Endothelial cell of umbilical vein (primary cell): ENCODE measurements at regions of chr2 and their contacts with region 1.

Region 1: GRCh38 chr2:224369028-224369632 is 32.8 kb downstream of the FAM124B start:
- DNase-seq: no peak
- H3K4me3 ChIP-seq: no peak overlapping the region
- H3K27ac ChIP-seq: no peak overlapping the region
- H3K4me1 ChIP-seq: no peaks in the 10 kb centered on the region
- H3K27me3 ChIP-seq: no peaks in the 10 kb centered on the region
- CTCF ChIP-seq: peak; percentile 49 to 50
- POLR2A ChIP-seq: no peak

Region 2: DNA sequence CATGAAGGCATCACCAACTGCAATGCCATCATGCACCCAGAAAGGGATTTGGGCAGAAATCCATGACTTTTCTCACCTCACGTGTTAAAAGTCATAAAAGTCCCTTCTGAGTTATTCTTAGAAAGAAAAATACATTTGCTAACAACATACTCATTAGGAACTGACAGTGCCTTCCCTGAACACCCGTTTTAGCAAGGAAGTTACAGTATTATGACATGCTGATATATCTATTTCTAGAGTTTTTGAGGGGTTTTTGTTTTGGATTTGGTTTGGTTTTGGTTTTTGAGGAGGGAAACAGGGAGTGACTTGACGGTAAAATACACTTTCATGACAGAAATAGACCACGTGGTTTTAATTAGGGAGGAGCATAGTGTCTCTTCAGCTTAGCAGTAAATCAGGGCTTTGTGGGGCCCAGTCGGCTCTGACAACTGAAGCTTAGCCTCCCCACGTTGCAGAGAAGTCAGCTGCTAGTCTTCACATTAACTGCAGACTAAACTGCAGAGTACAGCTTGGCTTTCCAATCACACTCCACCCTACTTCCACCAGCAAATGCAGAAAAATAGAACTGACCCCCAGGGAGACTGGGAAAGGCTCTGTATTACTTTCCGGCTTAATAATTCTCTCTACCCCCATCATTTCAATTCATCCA is 108.6 kb before region 1 on chr2:
- CTCF ChIA-PET with region 1: no interaction called
- POLR2A ChIA-PET with region 1: no interaction called
- dilution Hi-C with region 1: no loop called
- intact Hi-C with region 1: no loop called
- DNase-seq: no peak
- H3K4me3 ChIP-seq: no peak overlapping the region
- H3K27ac ChIP-seq: no peak overlapping the region
- H3K4me1 ChIP-seq: no peaks in the 10 kb centered on the region
- H3K27me3 ChIP-seq: peaks cover 0 to 4% of the 10 kb centered on the region in 2 experiments
- CTCF ChIP-seq: no peak
- POLR2A ChIP-seq: no peak

Region 3: GRCh38 chr2:224442071-224442967 is 73.2 kb after region 1 on chr2:
- CTCF ChIA-PET with region 1: interaction called, 84 read pairs
- POLR2A ChIA-PET with region 1: interaction called, 3 read pairs
- dilution Hi-C with region 1: no loop called
- intact Hi-C with region 1: no loop called
- DNase-seq: peak; percentile 61
- H3K4me3 ChIP-seq: peak overlapping the region; percentile 44 to 86 (median 69)
- H3K27ac ChIP-seq: peak overlapping the region; percentile 62
- H3K4me1 ChIP-seq: peaks cover 17% of the 10 kb centered on the region
- H3K27me3 ChIP-seq: no peaks in the 10 kb centered on the region
- CTCF ChIP-seq: no peak
- POLR2A ChIP-seq: peak; percentile 24

Region 4: DNA sequence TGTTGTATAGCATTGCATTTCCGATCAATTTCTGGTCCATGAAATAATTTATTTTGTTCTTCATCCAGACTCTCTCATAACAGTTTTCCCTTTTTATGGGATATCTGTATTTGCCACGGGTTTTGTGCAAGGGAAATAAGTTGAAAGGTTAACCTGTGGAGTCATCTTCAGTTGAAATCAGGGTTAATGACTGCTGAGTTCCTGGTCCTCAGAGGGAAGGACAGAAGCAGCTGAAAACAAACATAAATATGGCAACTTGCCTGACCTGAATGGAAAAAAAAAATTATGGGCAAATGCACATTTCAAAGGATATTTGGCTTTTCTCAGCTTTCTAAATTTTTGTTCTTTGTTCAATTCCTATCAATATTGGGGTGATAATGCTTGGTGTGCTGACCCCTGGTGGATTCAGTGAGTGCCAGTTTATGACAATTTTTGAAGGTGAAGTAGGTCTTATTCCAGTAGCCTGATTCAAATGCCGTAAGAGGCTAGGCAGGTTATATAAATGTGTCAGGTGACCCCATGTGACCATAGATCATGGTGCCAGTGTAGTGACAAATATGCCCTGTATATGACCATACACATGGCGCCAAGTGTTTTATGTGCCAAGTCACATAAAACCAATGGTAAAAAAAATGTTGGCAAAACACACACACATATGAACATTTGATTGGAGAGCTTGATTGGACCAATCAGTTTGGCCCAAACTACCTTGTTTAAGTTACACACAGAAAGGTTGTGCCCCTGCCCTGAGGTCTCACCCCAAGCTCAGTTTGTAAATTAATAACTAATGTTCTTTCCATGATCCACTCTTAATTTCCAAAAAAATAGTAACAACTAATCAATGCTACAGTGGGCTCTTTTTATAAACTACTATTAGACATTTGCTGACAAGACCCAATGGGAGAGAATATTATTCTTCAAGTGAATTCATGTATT is 80.3 kb after region 1 on chr2:
- CTCF ChIA-PET with region 1: interaction called, 84 read pairs
- POLR2A ChIA-PET with region 1: no interaction called
- dilution Hi-C with region 1: no loop called
- intact Hi-C with region 1: loop called (anchors 2 kb)
- DNase-seq: peak; percentile 85
- H3K4me3 ChIP-seq: no peak overlapping the region
- H3K27ac ChIP-seq: no peak overlapping the region
- H3K4me1 ChIP-seq: peaks cover 8% of the 10 kb centered on the region
- H3K27me3 ChIP-seq: no peaks in the 10 kb centered on the region
- CTCF ChIP-seq: peak; percentile 52 to 59
- POLR2A ChIP-seq: no peak

Region 5: DNA sequence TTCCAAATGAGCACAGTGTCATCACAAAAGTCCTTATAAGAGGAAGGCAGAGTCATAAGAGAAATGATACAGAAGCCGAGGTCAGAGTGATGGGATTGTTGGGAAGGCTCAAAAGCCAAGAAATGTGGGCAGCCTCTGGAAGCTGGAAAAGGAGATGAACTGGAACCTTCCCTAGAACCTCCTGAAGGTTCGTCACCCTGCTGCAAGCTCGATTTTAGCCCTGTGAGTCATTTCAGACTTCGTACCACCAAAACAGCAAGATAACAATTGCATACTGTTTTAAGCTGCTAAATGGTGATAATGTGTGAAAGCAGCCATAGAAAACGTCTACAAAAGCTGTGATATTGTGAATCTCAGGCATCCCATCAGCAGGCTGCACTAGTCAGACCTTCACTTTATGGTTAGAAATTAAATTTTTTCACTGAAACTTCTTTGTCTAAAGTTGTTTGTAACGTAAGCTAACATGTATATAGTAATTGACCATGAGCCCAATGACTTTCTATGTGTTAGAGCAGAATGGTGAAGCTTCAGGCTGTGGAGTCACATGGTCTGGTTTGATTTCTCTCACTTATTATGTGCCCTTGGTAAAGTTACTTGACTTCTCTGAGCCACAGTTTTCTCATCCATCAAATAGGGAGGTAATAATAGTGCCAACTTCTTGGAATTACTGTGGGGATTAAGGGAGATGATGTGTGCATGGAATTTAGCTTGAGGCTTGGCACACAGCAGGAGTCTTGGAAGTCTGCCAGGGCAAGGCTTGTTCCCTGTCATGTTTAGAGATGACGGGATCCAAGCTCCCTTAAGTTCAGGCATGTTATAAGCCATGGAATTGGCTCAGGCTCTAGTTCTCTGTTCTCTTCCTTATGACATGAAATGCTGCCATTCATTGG is 479.1 kb after region 1 on chr2:
- CTCF ChIA-PET with region 1: no interaction called
- POLR2A ChIA-PET with region 1: no interaction called
- dilution Hi-C with region 1: no loop called
- intact Hi-C with region 1: no loop called
- DNase-seq: peak; percentile 38
- H3K4me3 ChIP-seq: no peak overlapping the region
- H3K27ac ChIP-seq: no peak overlapping the region
- H3K4me1 ChIP-seq: no peaks in the 10 kb centered on the region
- H3K27me3 ChIP-seq: no peaks in the 10 kb centered on the region
- CTCF ChIP-seq: no peak
- POLR2A ChIP-seq: no peak